Panc1 (cell line): ENCODE measurements at regions of chr16 and their contacts with region 1.

Region 1: GRCh38 chr16:1492923-1493745 is at the start of gene TELO2:
- DNase-seq: peak; percentile 71
- ATAC-seq: peak; percentile 86
- H3K4me3 ChIP-seq: peak within 1 kb of the TSS; percentile 78 to 86
- H3K27ac ChIP-seq: peak within 1 kb of the TSS; percentile 98
- H3K4me1 ChIP-seq: peaks cover 12% of the 10 kb centered on the region
- H3K27me3 ChIP-seq: no peaks in the 10 kb centered on the region
- CTCF ChIP-seq: no peak
- total RNA-seq, gene TELO2: 65.4 TPM

Region 2: GRCh38 chr16:1413684-1414531 is 79.2 kb before region 1 on chr16:
- CTCF ChIA-PET with region 1: no interaction called
- POLR2A ChIA-PET with region 1: no interaction called
- in situ Hi-C with region 1: no loop called
- intact Hi-C with region 1: no loop called
- DNase-seq: no peak
- ATAC-seq: peak; percentile 69
- H3K4me3 ChIP-seq: peak overlapping the region; percentile 61 to 64
- H3K27ac ChIP-seq: peak overlapping the region; percentile 60; the same call in 1 of the 2 replicates
- H3K4me1 ChIP-seq: peaks cover 8% of the 10 kb centered on the region; the same call in 1 of the 2 replicates
- H3K27me3 ChIP-seq: no peaks in the 10 kb centered on the region
- CTCF ChIP-seq: peak; percentile 93

Region 3: GRCh38 chr16:1428511-1428910 is 64.6 kb before region 1 on chr16:
- CTCF ChIA-PET with region 1: interaction called, 11 read pairs
- POLR2A ChIA-PET with region 1: no interaction called
- in situ Hi-C with region 1: no loop called
- intact Hi-C with region 1: no loop called
- DNase-seq: no peak
- ATAC-seq: no peak
- H3K4me3 ChIP-seq: no peak overlapping the region
- H3K27ac ChIP-seq: no peak overlapping the region
- H3K4me1 ChIP-seq: no peaks in the 10 kb centered on the region
- H3K27me3 ChIP-seq: no peaks in the 10 kb centered on the region
- CTCF ChIP-seq: no peak; the same call in 1 of the 2 replicates

Region 4: GRCh38 chr16:1472974-1473373 is 20.2 kb before region 1 on chr16:
- CTCF ChIA-PET with region 1: interaction called, 3 read pairs
- POLR2A ChIA-PET with region 1: interaction called, 14 read pairs
- in situ Hi-C with region 1: no loop called
- intact Hi-C with region 1: no loop called
- DNase-seq: no peak
- ATAC-seq: no peak
- H3K4me3 ChIP-seq: peak overlapping the region in 1 of 2 experiments; percentile 32; a peak in 2 of 4 replicates
- H3K27ac ChIP-seq: no peak overlapping the region; the same call in 1 of the 2 replicates
- H3K4me1 ChIP-seq: peaks cover 28% of the 10 kb centered on the region
- H3K27me3 ChIP-seq: no peaks in the 10 kb centered on the region
- CTCF ChIP-seq: no peak